Heart left ventricle (tissue), 16 donors: ENCODE measurements at regions of chr15 and their contacts with region 1.

Region 1: DNA sequence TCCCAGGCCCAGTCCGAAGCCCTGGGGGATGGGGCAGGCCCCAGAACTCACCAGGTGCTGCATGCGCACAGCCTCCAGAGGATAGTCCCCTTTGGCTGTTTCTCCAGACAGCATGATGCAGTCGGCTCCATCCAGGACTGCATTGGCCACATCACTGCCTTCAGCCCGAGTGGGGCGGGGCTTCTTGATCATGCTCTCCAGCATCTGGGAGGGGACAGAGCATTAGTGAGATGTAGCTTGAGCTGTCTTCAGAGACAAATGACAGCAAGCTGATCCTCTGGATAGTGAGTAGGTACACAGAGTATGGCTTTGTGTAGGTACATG is 9.1 kb upstream of the GRAMD2A start:
- DNase-seq: no peak
- ATAC-seq: no peak
- H3K4me3 ChIP-seq: no peak overlapping the region
- H3K27ac ChIP-seq: no peak overlapping the region
- H3K4me1 ChIP-seq: peaks cover 0 to 34% (median 28%) of the 10 kb centered on the region in 12 donors
- H3K27me3 ChIP-seq: no peaks in the 10 kb centered on the region
- CTCF ChIP-seq: no peak
- POLR2A ChIP-seq: no peak

Region 2: GRCh38 chr15:72285927-72286516 is 79.4 kb after region 1 on chr15:
- intact Hi-C with region 1: loop called in 2 of 10 experiments (anchors 5 kb)
- DNase-seq: peak in 4 of 5 donors; percentile 19 to 52 (median 42)
- ATAC-seq: peak in 3 of 4 donors; percentile 56 to 70 (median 66)
- H3K4me3 ChIP-seq: no peak overlapping the region
- H3K27ac ChIP-seq: no peak overlapping the region
- H3K4me1 ChIP-seq: no peaks in the 10 kb centered on the region
- H3K27me3 ChIP-seq: no peaks in the 10 kb centered on the region
- CTCF ChIP-seq: peak; percentile 32 to 64 (median 48)
- POLR2A ChIP-seq: no peak